ENCODE measurements at regions of chr6 and their contacts with region 1.

Region 1: GRCh38 chr6:912871-913835 is 220.2 kb upstream of the EXOC2 start:
- DNase-seq: peak; percentile 56
- H3K4me3 ChIP-seq: no peak overlapping the region
- H3K27ac ChIP-seq: no peak overlapping the region
- H3K4me1 ChIP-seq: no peaks in the 10 kb centered on the region
- H3K27me3 ChIP-seq: no peaks in the 10 kb centered on the region
- CTCF ChIP-seq: peak in 3 of 4 experiments; percentile 58 to 60 (median 58)
- POLR2A ChIP-seq: no peak

Region 2: GRCh38 chr6:1047981-1048541 is 134.9 kb after region 1 on chr6:
- intact Hi-C with region 1: no loop called
- DNase-seq: no peak
- H3K4me3 ChIP-seq: no peak overlapping the region
- H3K27ac ChIP-seq: no peak overlapping the region
- H3K4me1 ChIP-seq: no peaks in the 10 kb centered on the region
- H3K27me3 ChIP-seq: no peaks in the 10 kb centered on the region
- CTCF ChIP-seq: no peak
- POLR2A ChIP-seq: no peak

Region 3: GRCh38 chr6:1311400-1312202 is 398.4 kb after region 1 on chr6 and contains the start of gene FOXQ1:
- intact Hi-C with region 1: loop called (anchors 5 kb)
- DNase-seq: peak; percentile 89
- H3K4me3 ChIP-seq: peak within 1 kb of the TSS; percentile 50 to 56
- H3K27ac ChIP-seq: peak within 1 kb of the TSS; percentile 83 to 90
- H3K4me1 ChIP-seq: no peaks in the 10 kb centered on the region
- H3K27me3 ChIP-seq: no peaks in the 10 kb centered on the region
- CTCF ChIP-seq: peak in 1 of 4 experiments; percentile 16
- POLR2A ChIP-seq: peak; percentile 97
- total RNA-seq, gene FOXQ1: 20.3 to 38.6 TPM

Measured in prostate gland (tissue), 2 donors.